GM13977 (cell line): ENCODE measurements at regions of chr14 and their contacts with region 1.

Region 1: GRCh38 chr14:73503648-73504047 is 12.9 kb downstream of the RIOX1 start:
- DNase-seq: peak; percentile 53
- CTCF ChIP-seq: no peak

Region 2: DNA sequence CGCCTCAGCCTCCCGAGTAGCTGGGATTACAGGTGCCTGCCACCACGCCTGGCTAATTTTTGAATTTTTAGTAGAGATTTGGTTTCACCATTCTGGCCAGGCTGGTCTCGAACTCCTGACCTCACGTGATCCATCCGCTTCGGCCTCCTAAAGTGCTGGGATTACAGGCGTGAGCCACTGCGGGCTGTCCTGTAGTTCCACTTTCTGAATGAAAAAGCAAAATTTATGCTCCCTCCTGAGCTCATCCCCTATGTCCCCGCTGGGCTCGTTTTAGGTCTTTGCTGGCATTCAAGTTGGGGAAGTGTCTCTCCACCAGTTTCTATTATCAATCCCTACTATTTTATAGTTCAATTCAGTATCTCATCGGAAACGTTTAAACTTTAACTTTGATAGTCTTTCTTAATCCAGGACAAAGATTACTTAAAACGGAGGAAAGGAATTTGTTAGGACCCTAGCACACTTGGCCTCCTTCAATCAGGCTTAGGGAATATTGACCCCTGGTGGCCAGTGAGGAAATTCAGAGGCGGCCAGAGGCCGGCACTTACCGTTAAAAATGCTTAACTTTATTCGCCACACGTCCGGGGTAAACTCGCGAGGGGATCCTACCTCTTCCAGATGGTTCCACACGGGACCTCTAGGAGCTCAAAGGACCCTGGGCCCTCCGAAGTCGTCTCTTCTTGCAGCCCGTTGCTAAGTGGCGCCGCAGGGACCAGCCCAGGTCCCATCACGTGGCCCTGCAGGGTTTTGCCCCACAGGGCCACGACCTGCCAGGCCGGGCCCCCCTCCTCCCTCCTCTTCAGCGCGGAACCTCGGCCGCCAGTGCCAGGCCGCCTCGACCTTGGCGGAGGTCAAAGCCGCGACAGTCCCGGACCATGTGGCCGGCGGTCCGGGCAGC is 129.7 kb after region 1 on chr14:
- in situ Hi-C with region 1: loop called (anchors 5 kb)
- DNase-seq: peak; percentile 80
- CTCF ChIP-seq: peak; percentile 88

Region 3: DNA sequence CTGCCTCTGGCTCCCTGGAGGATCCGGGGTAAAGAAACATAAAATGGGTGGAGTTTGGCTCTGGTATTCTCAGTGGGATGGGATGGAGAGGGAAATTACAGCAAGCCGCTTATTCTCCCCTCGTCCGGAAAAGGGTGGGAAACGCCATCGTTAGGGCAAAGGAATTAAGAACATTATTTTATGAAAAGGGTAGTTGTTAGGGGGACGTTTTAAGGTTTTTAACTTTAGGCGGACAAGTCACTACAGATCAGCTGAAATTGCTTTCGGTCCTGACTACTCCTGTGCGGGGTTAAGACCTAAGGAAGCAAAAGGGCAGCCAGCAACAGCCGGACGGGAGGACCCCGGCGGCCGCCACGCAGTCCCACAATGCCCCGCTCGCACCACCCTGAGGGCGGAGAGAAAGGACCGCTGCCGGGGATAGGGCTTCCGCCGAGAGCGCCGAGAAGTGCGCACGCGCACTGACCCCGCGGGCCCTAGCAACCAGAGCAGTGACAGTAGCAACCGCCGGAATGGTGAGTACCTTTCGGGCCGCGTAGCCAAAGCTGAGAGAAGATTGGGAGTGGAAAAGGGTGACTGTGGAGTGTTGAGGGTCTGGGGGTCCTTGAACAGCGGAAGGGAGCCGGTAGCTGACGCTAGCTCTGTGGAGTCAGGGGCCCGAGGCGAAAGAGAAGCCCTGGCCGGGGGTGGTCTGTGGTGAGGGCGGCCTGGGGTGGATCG is 141.0 kb after region 1 on chr14 and contains the start of gene DNAL1:
- in situ Hi-C with region 1: no loop called
- DNase-seq: peak; percentile 96
- CTCF ChIP-seq: no peak

Region 4: GRCh38 chr14:74018586-74019407 is 515.1 kb after region 1 on chr14 and contains the starts of genes BBOF1 and ENTPD5:
- in situ Hi-C with region 1: loop called (anchors 25 kb)
- DNase-seq: peak; percentile 96
- CTCF ChIP-seq: no peak